Left cardiac atrium (tissue), 4 donors: ENCODE measurements at regions of chr3 and their contacts with region 1.

Region 1: GRCh38 chr3:98022978-98023820 is 11.9 kb downstream of the GABRR3 start:
- DNase-seq: peak; percentile 92
- ATAC-seq: peak; percentile 85 to 87

Region 2: GRCh38 chr3:97793420-97794019 is 229.7 kb before region 1 on chr3:
- intact Hi-C with region 1: loop called (anchors 1 to 2 kb)
- DNase-seq: no peak
- ATAC-seq: no peak

Region 3: GRCh38 chr3:98086873-98087272 is 63.7 kb after region 1 on chr3 and contains the start of gene OR5AC2:
- intact Hi-C with region 1: no loop called
- DNase-seq: no peak
- ATAC-seq: no peak
- total RNA-seq, gene OR5AC2: not detected

Region 4: GRCh38 chr3:98172621-98173020 is 149.4 kb after region 1 on chr3:
- intact Hi-C with region 1: no loop called
- DNase-seq: no peak
- ATAC-seq: no peak